HCT116 (cell line): ENCODE measurements at regions of chr6 and their contacts with region 1.

Region 1: GRCh38 chr6:44332585-44332984 is 9.9 kb upstream of the SPATS1 start:
- DNase-seq: no peak
- ATAC-seq: no peak
- H3K4me3 ChIP-seq: no peak overlapping the region
- H3K27ac ChIP-seq: no peak overlapping the region
- H3K4me1 ChIP-seq: no peaks in the 10 kb centered on the region
- H3K27me3 ChIP-seq: peaks cover 10% of the 10 kb centered on the region; the same call in 1 of the 2 replicates
- CTCF ChIP-seq: no peak
- POLR2A ChIP-seq: no peak
- RAD21 ChIP-seq: no peak

Region 2: DNA sequence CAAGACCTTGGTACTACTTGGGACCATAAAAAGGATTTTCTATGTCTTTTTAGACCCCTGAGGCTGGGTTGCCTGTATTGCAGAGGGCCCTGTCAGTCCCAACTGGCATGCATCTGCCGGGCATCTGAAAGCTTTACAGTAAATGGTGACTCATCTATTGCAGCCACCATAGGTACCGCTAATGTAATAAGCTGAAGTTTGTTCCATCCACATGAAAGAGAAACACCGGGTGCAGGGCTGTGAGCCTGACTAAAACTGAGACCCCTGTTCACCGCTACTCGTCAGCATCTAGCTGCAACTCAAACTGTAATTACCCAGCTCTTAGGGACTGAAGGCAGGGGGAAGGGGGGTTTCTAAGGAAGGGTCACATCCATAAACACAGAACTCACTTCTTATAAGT is 1930.4 kb before region 1 on chr6:
- CTCF ChIA-PET with region 1: no interaction called
- POLR2A ChIA-PET with region 1: no interaction called
- RAD21 ChIA-PET with region 1: no interaction called
- intact Hi-C with region 1: no loop called
- DNase-seq: peak; percentile 58
- ATAC-seq: peak; percentile 52
- H3K4me3 ChIP-seq: peak overlapping the region in 1 of 2 experiments; percentile 25; a peak in 2 of 4 replicates
- H3K27ac ChIP-seq: peak overlapping the region; percentile 86
- H3K4me1 ChIP-seq: peaks cover 54 to 61% of the 10 kb centered on the region in 2 experiments
- H3K27me3 ChIP-seq: no peaks in the 10 kb centered on the region
- CTCF ChIP-seq: no peak
- POLR2A ChIP-seq: no peak
- RAD21 ChIP-seq: no peak

Region 3: DNA sequence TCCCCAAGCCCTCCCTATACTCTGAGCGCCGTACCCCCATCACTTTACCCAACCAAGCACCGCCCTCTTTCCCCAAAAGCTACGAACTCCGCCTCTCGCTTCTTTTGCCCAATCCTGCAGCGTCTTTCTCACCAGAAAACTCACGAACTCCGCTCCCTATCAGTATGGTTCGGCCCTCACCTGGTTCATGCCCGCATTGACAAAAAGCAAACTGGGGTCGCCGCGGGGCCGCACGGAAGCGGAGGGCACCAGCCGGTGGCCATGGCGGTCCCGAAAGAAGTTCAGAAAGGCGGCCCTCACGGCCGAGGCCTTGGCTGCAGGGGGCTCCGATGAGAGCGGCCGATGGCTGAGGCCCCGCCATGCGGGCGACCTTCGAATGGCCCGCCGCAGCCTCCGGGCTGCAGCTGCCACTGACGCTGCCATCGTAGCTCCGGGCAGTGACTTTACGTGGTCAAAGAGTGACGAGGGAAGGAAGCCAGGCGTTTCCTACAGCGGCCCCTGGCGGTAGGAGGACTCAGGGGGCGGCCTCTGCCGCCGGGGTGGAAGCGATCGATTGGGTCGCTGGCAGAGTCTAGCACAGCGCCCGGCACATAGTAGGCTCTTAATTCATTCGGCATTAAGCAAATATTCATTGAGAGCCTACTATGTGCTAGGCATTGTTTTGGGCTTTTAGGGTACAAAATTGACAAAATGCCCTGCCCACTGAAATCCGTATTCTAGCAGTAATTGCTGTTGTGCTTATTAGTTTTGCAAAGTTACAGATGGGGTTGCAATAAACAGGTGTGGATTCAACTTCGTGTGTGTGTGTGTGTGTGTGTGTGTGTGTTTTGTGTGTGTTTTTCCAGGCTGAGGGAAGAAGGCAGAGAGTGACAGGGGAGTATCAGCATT is 19.4 kb before region 1 on chr6 and contains the start of gene AARS2:
- CTCF ChIA-PET with region 1: interaction called, 10 read pairs
- POLR2A ChIA-PET with region 1: no interaction called
- RAD21 ChIA-PET with region 1: no interaction called
- intact Hi-C with region 1: no loop called
- DNase-seq: peak; percentile 81
- ATAC-seq: peak; percentile 95
- H3K4me3 ChIP-seq: peak within 1 kb of the TSS; percentile 97 to 98
- H3K27ac ChIP-seq: peak within 1 kb of the TSS; percentile 72
- H3K4me1 ChIP-seq: peaks cover 6 to 16% of the 10 kb centered on the region in 2 experiments
- H3K27me3 ChIP-seq: peaks cover 3% of the 10 kb centered on the region; the same call in 1 of the 2 replicates
- CTCF ChIP-seq: peak; percentile 73 to 98 (median 97)
- POLR2A ChIP-seq: peak; percentile 73
- RAD21 ChIP-seq: no peak
- total RNA-seq, gene AARS2: 14.9 TPM